H1 (cell line): ENCODE measurements at regions of chr5 and their contacts with region 1.

Region 1: DNA sequence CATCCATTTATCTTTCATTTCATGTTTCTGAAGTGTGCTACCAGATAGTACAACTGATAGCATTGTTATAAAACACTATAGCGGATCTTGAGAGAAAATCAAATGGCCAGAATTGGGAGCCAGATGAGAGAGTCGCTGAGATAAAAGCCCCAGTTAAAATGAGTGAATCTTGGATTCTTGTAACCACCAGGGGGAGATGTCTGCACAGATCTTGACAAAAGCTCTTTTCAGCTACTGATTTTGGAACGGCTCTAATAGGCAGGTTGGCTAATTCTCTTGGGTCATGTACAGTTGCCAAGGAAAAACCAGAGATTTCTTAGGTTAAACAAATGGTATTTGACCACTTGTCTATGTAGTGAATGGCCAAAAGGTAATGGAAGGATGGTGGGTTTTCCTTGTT is 21.7 kb downstream of the F2RL2 start:
- DNase-seq: no peak
- H3K4me3 ChIP-seq: no peak overlapping the region
- H3K27ac ChIP-seq: no peak overlapping the region
- H3K4me1 ChIP-seq: no peaks in the 10 kb centered on the region
- H3K27me3 ChIP-seq: no peaks in the 10 kb centered on the region
- CTCF ChIP-seq: peak in 2 of 3 experiments; percentile 63 to 79; a peak in 3 of 4 replicates
- EP300 ChIP-seq: no peak
- POLR2A ChIP-seq: no peak
- RAD21 ChIP-seq: peak; percentile 78 to 88

Region 2: GRCh38 chr5:76312783-76313182 is 288.7 kb before region 1 on chr5:
- CTCF ChIA-PET with region 1: no interaction called
- POLR2A ChIA-PET with region 1: no interaction called
- DNase-seq: no peak
- H3K4me3 ChIP-seq: no peak overlapping the region
- H3K27ac ChIP-seq: no peak overlapping the region
- H3K4me1 ChIP-seq: no peaks in the 10 kb centered on the region
- H3K27me3 ChIP-seq: no peaks in the 10 kb centered on the region
- CTCF ChIP-seq: no peak
- EP300 ChIP-seq: no peak
- POLR2A ChIP-seq: no peak
- RAD21 ChIP-seq: no peak

Region 3: DNA sequence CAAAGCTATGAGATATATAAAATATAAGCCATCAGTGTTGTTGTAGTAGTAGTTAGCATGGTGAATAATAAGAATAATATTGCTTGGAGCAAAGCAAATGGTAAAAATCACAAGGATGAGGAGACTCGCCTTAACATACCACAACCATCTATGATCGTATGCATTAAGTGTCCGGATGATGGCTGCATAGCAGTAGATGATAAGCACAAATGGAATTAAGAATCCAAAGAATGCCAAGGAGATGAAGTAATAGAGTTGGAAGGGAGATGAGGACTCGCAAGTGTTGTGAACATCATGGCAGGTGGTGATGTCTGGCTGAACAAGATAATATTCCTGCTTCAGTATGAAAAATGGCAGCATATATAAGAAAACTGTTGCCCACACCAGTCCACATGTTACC is 16.2 kb after region 1 on chr5:
- CTCF ChIA-PET with region 1: interaction called, 15 read pairs
- POLR2A ChIA-PET with region 1: no interaction called
- DNase-seq: no peak
- H3K4me3 ChIP-seq: no peak overlapping the region
- H3K27ac ChIP-seq: no peak overlapping the region
- H3K4me1 ChIP-seq: no peaks in the 10 kb centered on the region
- H3K27me3 ChIP-seq: no peaks in the 10 kb centered on the region
- CTCF ChIP-seq: no peak
- EP300 ChIP-seq: no peak
- POLR2A ChIP-seq: no peak
- RAD21 ChIP-seq: no peak

Region 4: DNA sequence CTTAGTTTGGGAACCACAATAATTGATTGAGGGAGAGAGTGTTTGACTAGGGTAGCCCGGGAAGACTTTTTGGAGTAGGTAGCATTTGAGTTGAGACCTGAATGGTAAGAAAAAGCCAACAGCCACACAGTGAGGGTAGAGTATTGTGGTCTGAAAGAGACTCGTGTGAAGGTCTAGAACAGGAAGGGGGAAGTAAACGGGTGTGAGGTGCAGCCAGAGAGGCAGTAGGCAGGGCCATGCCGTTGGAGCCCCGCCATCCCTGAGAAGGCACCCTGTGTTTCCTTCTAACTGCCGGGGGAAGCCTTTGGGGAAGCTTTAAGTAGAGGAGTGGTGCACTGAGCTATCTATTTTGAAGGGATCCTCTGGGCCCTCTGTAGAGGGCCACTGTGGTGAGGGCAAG is 25.3 kb after region 1 on chr5:
- CTCF ChIA-PET with region 1: interaction called, 16 read pairs
- POLR2A ChIA-PET with region 1: no interaction called
- DNase-seq: no peak
- H3K4me3 ChIP-seq: no peak overlapping the region
- H3K27ac ChIP-seq: no peak overlapping the region
- H3K4me1 ChIP-seq: peaks cover 0 to 7% (median 4%) of the 10 kb centered on the region in 4 experiments; a peak in 3 of 7 replicates
- H3K27me3 ChIP-seq: no peaks in the 10 kb centered on the region
- CTCF ChIP-seq: no peak
- EP300 ChIP-seq: no peak
- POLR2A ChIP-seq: no peak
- RAD21 ChIP-seq: no peak